ENCODE measurements at regions of chr1 and their contacts with region 1.

Region 1: GRCh38 chr1:61077676-61078541 is 4.5 kb upstream of the NFIA start:
- DNase-seq: peak; percentile 63 to 98 (median 95)
- ATAC-seq: peak; percentile 84
- H3K4me3 ChIP-seq: peak overlapping the region; percentile 73
- H3K4me3 Mint-ChIP-seq: peak overlapping the region; percentile 91 to 98 (median 94)
- H3K27ac ChIP-seq: peak overlapping the region; percentile 75
- H3K27ac Mint-ChIP-seq: peak overlapping the region; percentile 87 to 100 (median 96)
- H3K4me1 ChIP-seq: peaks cover 24 to 41% of the 10 kb centered on the region in 2 donors
- H3K4me1 Mint-ChIP-seq: peaks cover 34 to 49% (median 46%) of the 10 kb centered on the region in 7 donors
- H3K27me3 ChIP-seq: no peaks in the 10 kb centered on the region
- H3K27me3 Mint-ChIP-seq: peaks cover 0 to 58% (median 0%) of the 10 kb centered on the region in 5 donors

Region 2: DNA sequence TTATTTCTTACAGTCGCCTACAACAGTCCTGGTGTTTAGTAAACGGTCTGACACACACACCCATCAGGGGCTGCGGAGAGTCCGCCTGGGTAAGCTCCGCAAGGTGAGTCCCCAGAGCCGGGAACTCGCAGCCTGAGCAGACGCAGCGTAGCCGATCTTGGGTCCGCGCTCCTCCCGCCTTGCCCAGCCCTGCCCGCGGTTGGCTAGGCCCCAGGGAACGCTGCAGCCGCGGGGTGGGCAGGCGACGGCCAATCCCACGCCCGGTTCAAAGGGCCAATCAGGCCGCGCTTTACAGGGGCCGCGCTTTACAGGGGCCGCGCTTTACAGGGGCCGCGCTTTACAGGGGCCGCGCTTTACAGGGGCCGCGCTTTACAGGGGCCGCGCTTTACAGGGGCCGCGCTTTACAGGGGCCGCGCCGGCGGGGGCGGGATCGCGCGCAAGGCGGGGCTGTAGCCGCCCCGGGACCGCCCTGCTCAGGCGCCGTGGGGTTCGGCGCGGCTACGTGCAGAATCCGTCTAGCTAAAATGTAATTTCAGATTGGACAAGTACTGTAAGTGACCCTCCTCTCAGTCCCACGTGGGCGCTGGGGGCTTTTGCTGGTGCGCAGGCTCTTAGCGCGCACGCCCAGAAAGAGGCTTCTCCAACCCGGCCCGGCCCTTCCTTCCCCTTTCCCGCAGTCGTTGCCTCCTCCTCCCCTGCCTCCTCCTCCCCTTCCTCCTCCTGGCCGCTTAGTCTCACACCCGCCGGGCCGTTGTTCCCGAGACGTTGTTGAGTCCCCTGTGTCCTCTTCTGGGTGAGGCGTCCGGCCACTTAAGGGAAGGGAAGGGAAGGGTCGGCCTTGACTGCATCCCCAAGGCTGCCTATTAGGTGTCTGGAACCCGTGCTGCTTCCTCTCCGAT is 1781.3 kb before region 1 on chr1 and contains the start of gene FGGY:
- CTCF ChIA-PET with region 1: no interaction called
- POLR2A ChIA-PET with region 1: no interaction called
- intact Hi-C with region 1: loop called in 1 of 2 experiments (anchors 5 kb)
- DNase-seq: peak; percentile 71 to 85 (median 81)
- ATAC-seq: peak; percentile 93
- H3K4me3 ChIP-seq: peak within 1 kb of the TSS; percentile 73
- H3K4me3 Mint-ChIP-seq: peak within 1 kb of the TSS; percentile 77 to 95 (median 92)
- H3K27ac ChIP-seq: peak within 1 kb of the TSS; percentile 85
- H3K27ac Mint-ChIP-seq: peak within 1 kb of the TSS; percentile 83 to 96 (median 92)
- H3K4me1 ChIP-seq: peaks cover 7 to 11% of the 10 kb centered on the region in 2 donors
- H3K4me1 Mint-ChIP-seq: peaks cover 9 to 51% (median 27%) of the 10 kb centered on the region in 7 donors
- H3K27me3 ChIP-seq: no peaks in the 10 kb centered on the region
- H3K27me3 Mint-ChIP-seq: no peaks in the 10 kb centered on the region
- total RNA-seq, gene FGGY: 10.7 to 15.2 (median 13.9) TPM

Region 3: GRCh38 chr1:60596791-60597747 is 480.8 kb before region 1 on chr1:
- CTCF ChIA-PET with region 1: no interaction called
- POLR2A ChIA-PET with region 1: no interaction called
- intact Hi-C with region 1: no loop called
- DNase-seq: no peak
- ATAC-seq: no peak
- H3K4me3 ChIP-seq: no peak overlapping the region
- H3K4me3 Mint-ChIP-seq: no peak overlapping the region
- H3K27ac ChIP-seq: no peak overlapping the region
- H3K27ac Mint-ChIP-seq: no peak overlapping the region
- H3K4me1 ChIP-seq: no peaks in the 10 kb centered on the region
- H3K4me1 Mint-ChIP-seq: no peaks in the 10 kb centered on the region
- H3K27me3 ChIP-seq: no peaks in the 10 kb centered on the region
- H3K27me3 Mint-ChIP-seq: peaks cover 0 to 11% (median 6%) of the 10 kb centered on the region in 5 donors

Region 4: GRCh38 chr1:61049850-61050540 is 27.9 kb before region 1 on chr1:
- CTCF ChIA-PET with region 1: interaction called, 29 read pairs
- POLR2A ChIA-PET with region 1: interaction called, 32 read pairs
- intact Hi-C with region 1: loop called (anchors 1 kb)
- DNase-seq: peak; percentile 69 to 93 (median 84)
- ATAC-seq: peak; percentile 95
- H3K4me3 ChIP-seq: peak overlapping the region; percentile 64
- H3K4me3 Mint-ChIP-seq: peak overlapping the region; percentile 69 to 88 (median 80)
- H3K27ac ChIP-seq: no peak overlapping the region
- H3K27ac Mint-ChIP-seq: peak overlapping the region in 1 of 9 donors; percentile 38
- H3K4me1 ChIP-seq: peaks cover 10 to 15% of the 10 kb centered on the region in 2 donors
- H3K4me1 Mint-ChIP-seq: peaks cover 17 to 37% (median 26%) of the 10 kb centered on the region in 7 donors
- H3K27me3 ChIP-seq: peaks cover 4 to 6% of the 10 kb centered on the region in 2 donors
- H3K27me3 Mint-ChIP-seq: peaks cover 39 to 61% (median 45%) of the 10 kb centered on the region in 5 donors

Region 5: DNA sequence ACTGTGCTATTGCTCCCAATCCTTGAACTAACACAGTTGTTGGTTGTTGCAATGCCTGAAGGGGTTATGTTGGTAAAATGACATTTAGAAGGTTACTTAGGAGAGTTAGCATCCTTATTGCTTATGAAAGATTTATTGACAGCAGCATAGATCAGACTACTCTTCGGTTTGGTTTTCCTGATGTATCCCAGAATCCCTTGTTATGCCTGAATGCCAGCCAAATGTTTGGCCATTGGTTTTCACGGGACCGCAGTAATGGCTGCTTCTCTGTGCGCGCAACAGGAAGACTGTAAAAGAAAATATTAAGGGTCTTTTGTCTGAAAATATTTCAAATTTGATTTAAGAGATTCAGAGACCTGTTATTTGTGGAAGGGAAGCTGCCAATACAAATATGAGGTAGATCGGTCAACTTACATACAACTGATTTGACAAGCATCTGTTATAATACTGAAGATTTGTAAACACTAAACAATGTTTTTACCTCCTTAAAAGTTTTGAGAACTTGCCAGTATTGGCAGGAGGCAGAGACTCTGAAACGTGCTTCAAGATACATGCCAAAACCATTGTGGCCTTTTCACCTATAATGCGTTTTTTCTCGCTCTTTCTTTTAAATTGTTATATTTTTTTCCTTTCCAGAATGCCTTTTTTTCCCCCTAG is 12.8 kb after region 1 on chr1:
- CTCF ChIA-PET with region 1: interaction called, 4 read pairs
- POLR2A ChIA-PET with region 1: interaction called, 4 read pairs
- intact Hi-C with region 1: loop called in 1 of 2 experiments (anchors 1 kb)
- DNase-seq: no peak
- ATAC-seq: no peak
- H3K4me3 ChIP-seq: no peak overlapping the region
- H3K4me3 Mint-ChIP-seq: no peak overlapping the region
- H3K27ac ChIP-seq: no peak overlapping the region
- H3K27ac Mint-ChIP-seq: no peak overlapping the region
- H3K4me1 ChIP-seq: no peaks in the 10 kb centered on the region
- H3K4me1 Mint-ChIP-seq: peaks cover 0 to 3% (median 0%) of the 10 kb centered on the region in 7 donors
- H3K27me3 ChIP-seq: no peaks in the 10 kb centered on the region
- H3K27me3 Mint-ChIP-seq: peaks cover 0 to 59% (median 0%) of the 10 kb centered on the region in 5 donors

Region 6: GRCh38 chr1:61104220-61104671 is 26.3 kb after region 1 on chr1:
- CTCF ChIA-PET with region 1: no interaction called
- POLR2A ChIA-PET with region 1: no interaction called
- intact Hi-C with region 1: no loop called
- DNase-seq: no peak
- ATAC-seq: no peak
- H3K4me3 ChIP-seq: no peak overlapping the region
- H3K4me3 Mint-ChIP-seq: no peak overlapping the region
- H3K27ac ChIP-seq: no peak overlapping the region
- H3K27ac Mint-ChIP-seq: no peak overlapping the region
- H3K4me1 ChIP-seq: no peaks in the 10 kb centered on the region
- H3K4me1 Mint-ChIP-seq: peaks cover 0 to under 1% (median 0%) of the 10 kb centered on the region in 7 donors
- H3K27me3 ChIP-seq: no peaks in the 10 kb centered on the region
- H3K27me3 Mint-ChIP-seq: peaks cover 0 to 27% (median 0%) of the 10 kb centered on the region in 5 donors

Region 7: GRCh38 chr1:61782771-61783170 is 704.9 kb after region 1 on chr1:
- CTCF ChIA-PET with region 1: no interaction called
- POLR2A ChIA-PET with region 1: no interaction called
- intact Hi-C with region 1: loop called (anchors 1 to 5 kb)
- DNase-seq: peak in 8 of 9 donors; percentile 49 to 93 (median 90)
- ATAC-seq: peak; percentile 98
- H3K4me3 ChIP-seq: no peak overlapping the region
- H3K4me3 Mint-ChIP-seq: peak overlapping the region; percentile 66 to 94 (median 76)
- H3K27ac ChIP-seq: peak overlapping the region; percentile 39
- H3K27ac Mint-ChIP-seq: peak overlapping the region; percentile 75 to 95 (median 88)
- H3K4me1 ChIP-seq: peaks cover 26 to 32% of the 10 kb centered on the region in 2 donors
- H3K4me1 Mint-ChIP-seq: peaks cover 18 to 77% (median 67%) of the 10 kb centered on the region in 7 donors
- H3K27me3 ChIP-seq: no peaks in the 10 kb centered on the region
- H3K27me3 Mint-ChIP-seq: no peaks in the 10 kb centered on the region

Region 8: GRCh38 chr1:62783723-62784508 is 1706.0 kb after region 1 on chr1 and contains the start of gene ATG4C:
- CTCF ChIA-PET with region 1: no interaction called
- POLR2A ChIA-PET with region 1: no interaction called
- intact Hi-C with region 1: loop called (anchors 2 to 5 kb)
- DNase-seq: peak; percentile 72 to 97 (median 96)
- ATAC-seq: peak; percentile 96
- H3K4me3 ChIP-seq: peak within 1 kb of the TSS; percentile 94
- H3K4me3 Mint-ChIP-seq: peak within 1 kb of the TSS in 1 of 10 donors; percentile 14
- H3K27ac ChIP-seq: peak within 1 kb of the TSS; percentile 87
- H3K27ac Mint-ChIP-seq: no peak within 1 kb of the TSS
- H3K4me1 ChIP-seq: peaks cover 6 to 7% of the 10 kb centered on the region in 2 donors
- H3K4me1 Mint-ChIP-seq: peaks cover 9 to 21% (median 20%) of the 10 kb centered on the region in 7 donors
- H3K27me3 ChIP-seq: peaks cover 0 to 6% of the 10 kb centered on the region in 2 donors
- H3K27me3 Mint-ChIP-seq: peaks cover 0 to 16% (median 3%) of the 10 kb centered on the region in 5 donors
- total RNA-seq, gene ATG4C: 6.8 to 16.5 (median 11.5) TPM